Activated CD4-positive, alpha-beta T cell treated with anti-CD3 and anti-CD28 coated beads for 36 hours (primary cell): ENCODE measurements at regions of chr18 and their contacts with region 1.

Region 1: GRCh38 chr18:10771053-10771709 is 245.4 kb downstream of the NAPG start:
- DNase-seq: peak; percentile 25
- ATAC-seq: peak; percentile 64
- H3K4me3 Mint-ChIP-seq: no peak overlapping the region
- H3K27ac Mint-ChIP-seq: no peak overlapping the region
- H3K4me1 Mint-ChIP-seq: no peaks in the 10 kb centered on the region
- H3K27me3 Mint-ChIP-seq: peaks cover 15% of the 10 kb centered on the region

Region 2: GRCh38 chr18:10804126-10804525 is 32.9 kb after region 1 on chr18:
- CTCF ChIA-PET with region 1: no interaction called
- POLR2A ChIA-PET with region 1: no interaction called
- intact Hi-C with region 1: no loop called
- DNase-seq: no peak
- ATAC-seq: no peak
- H3K4me3 Mint-ChIP-seq: no peak overlapping the region
- H3K27ac Mint-ChIP-seq: no peak overlapping the region
- H3K4me1 Mint-ChIP-seq: no peaks in the 10 kb centered on the region
- H3K27me3 Mint-ChIP-seq: no peaks in the 10 kb centered on the region

Region 3: GRCh38 chr18:10822456-10822855 is 51.3 kb after region 1 on chr18:
- CTCF ChIA-PET with region 1: no interaction called
- POLR2A ChIA-PET with region 1: no interaction called
- intact Hi-C with region 1: loop called in 1 of 2 experiments (anchors 5 kb)
- DNase-seq: no peak
- ATAC-seq: no peak
- H3K4me3 Mint-ChIP-seq: no peak overlapping the region
- H3K27ac Mint-ChIP-seq: no peak overlapping the region
- H3K4me1 Mint-ChIP-seq: peaks cover 2% of the 10 kb centered on the region
- H3K27me3 Mint-ChIP-seq: peaks cover 30% of the 10 kb centered on the region

Region 4: GRCh38 chr18:10860928-10861327 is 89.7 kb after region 1 on chr18:
- CTCF ChIA-PET with region 1: no interaction called
- POLR2A ChIA-PET with region 1: no interaction called
- intact Hi-C with region 1: no loop called
- DNase-seq: no peak
- ATAC-seq: no peak
- H3K4me3 Mint-ChIP-seq: no peak overlapping the region
- H3K27ac Mint-ChIP-seq: no peak overlapping the region
- H3K4me1 Mint-ChIP-seq: no peaks in the 10 kb centered on the region
- H3K27me3 Mint-ChIP-seq: peaks cover 6% of the 10 kb centered on the region

Region 5: GRCh38 chr18:11074889-11075288 is 303.7 kb after region 1 on chr18:
- CTCF ChIA-PET with region 1: no interaction called
- POLR2A ChIA-PET with region 1: no interaction called
- intact Hi-C with region 1: no loop called
- DNase-seq: no peak
- ATAC-seq: no peak
- H3K4me3 Mint-ChIP-seq: no peak overlapping the region
- H3K27ac Mint-ChIP-seq: no peak overlapping the region
- H3K4me1 Mint-ChIP-seq: no peaks in the 10 kb centered on the region
- H3K27me3 Mint-ChIP-seq: no peaks in the 10 kb centered on the region

Region 6: DNA sequence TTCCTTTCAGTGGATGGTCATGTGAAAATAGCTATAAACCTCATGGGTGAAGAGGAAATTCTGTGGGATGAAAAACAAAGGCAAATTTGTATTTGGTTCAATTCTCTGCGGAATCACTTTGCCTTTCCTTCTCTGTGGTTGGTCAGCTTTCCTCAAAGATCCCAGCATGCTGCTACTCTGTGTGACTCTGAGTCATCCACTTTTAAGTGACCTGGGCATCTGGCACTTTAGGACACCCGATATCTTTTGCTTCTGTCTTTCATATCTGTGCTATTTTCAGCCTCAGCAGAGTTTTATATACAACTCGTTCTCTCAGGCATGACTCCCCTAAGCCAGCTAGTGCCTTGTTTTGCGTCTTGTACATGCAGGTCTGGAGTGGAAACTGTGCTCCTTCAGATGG is 595.2 kb after region 1 on chr18:
- CTCF ChIA-PET with region 1: no interaction called
- POLR2A ChIA-PET with region 1: no interaction called
- intact Hi-C with region 1: no loop called
- DNase-seq: no peak
- ATAC-seq: no peak
- H3K4me3 Mint-ChIP-seq: no peak overlapping the region
- H3K27ac Mint-ChIP-seq: no peak overlapping the region
- H3K4me1 Mint-ChIP-seq: no peaks in the 10 kb centered on the region
- H3K27me3 Mint-ChIP-seq: peaks cover 3% of the 10 kb centered on the region